ENCODE measurements at regions of chr11 and their contacts with region 1.

Region 1: DNA sequence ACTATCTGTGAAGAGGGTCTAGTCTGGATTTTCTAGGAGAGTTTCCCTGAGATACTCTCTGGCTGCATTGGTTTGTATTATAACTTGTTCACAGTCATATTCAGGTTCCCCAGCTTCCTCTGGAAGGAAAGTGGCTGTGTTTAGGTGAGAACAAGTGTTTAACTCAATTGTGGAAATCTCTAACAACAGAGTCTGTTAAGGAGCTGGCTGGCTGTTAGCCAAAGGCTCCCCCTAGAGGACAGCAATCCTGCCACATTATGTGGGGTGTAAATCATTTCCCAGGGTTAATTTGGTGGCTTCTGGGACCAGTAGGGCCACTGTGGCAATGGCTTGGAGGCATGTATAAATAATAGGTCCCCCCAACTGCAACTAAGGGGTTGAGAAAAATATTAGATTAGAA is 18.4 kb downstream of the MS4A6E start:
- DNase-seq: peak; percentile 17 to 64
- H3K4me3 ChIP-seq: no peak overlapping the region
- H3K27ac ChIP-seq: no peak overlapping the region
- H3K4me1 ChIP-seq: peaks cover 0 to 4% (median 0%) of the 10 kb centered on the region in 4 experiments; a peak in 1 of 7 replicates
- H3K27me3 ChIP-seq: no peaks in the 10 kb centered on the region
- CTCF ChIP-seq: peak; percentile 48 to 83 (median 66)
- EP300 ChIP-seq: no peak
- POLR2A ChIP-seq: no peak
- RAD21 ChIP-seq: peak; percentile 79 to 83

Region 2: GRCh38 chr11:60235321-60235720 is 110.2 kb before region 1 on chr11:
- CTCF ChIA-PET with region 1: no interaction called
- POLR2A ChIA-PET with region 1: no interaction called
- DNase-seq: no peak
- H3K4me3 ChIP-seq: no peak overlapping the region
- H3K27ac ChIP-seq: no peak overlapping the region
- H3K4me1 ChIP-seq: no peaks in the 10 kb centered on the region
- H3K27me3 ChIP-seq: no peaks in the 10 kb centered on the region
- CTCF ChIP-seq: no peak
- EP300 ChIP-seq: no peak
- POLR2A ChIP-seq: no peak
- RAD21 ChIP-seq: no peak

Region 3: DNA sequence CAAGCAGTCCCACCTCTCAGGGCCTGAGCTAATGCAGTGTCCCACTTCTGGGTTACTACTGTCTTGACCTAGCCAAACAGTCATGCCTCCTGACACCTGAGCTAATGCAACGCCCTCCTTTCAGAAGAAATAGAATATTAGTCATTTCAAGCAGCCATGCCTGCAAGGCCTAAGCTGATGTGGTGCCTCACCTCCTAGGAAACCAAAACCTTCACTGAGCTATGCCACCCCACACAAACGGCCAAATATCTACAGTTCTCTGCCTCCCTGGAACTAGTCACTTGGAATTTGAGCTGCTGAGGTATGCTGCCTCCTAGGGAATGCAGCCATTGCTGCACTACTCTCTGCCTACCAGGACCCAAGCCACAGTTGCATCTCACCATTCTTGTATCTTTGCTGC is 26.8 kb before region 1 on chr11:
- CTCF ChIA-PET with region 1: interaction called, 52 read pairs
- POLR2A ChIA-PET with region 1: no interaction called
- DNase-seq: no peak
- H3K4me3 ChIP-seq: no peak overlapping the region
- H3K27ac ChIP-seq: no peak overlapping the region
- H3K4me1 ChIP-seq: no peaks in the 10 kb centered on the region
- H3K27me3 ChIP-seq: no peaks in the 10 kb centered on the region
- CTCF ChIP-seq: peak in 2 of 3 experiments; percentile 3 to 33; a peak in 1 of 4 replicates
- EP300 ChIP-seq: no peak
- POLR2A ChIP-seq: no peak
- RAD21 ChIP-seq: no peak; a peak in 1 of 4 replicates

Region 4: DNA sequence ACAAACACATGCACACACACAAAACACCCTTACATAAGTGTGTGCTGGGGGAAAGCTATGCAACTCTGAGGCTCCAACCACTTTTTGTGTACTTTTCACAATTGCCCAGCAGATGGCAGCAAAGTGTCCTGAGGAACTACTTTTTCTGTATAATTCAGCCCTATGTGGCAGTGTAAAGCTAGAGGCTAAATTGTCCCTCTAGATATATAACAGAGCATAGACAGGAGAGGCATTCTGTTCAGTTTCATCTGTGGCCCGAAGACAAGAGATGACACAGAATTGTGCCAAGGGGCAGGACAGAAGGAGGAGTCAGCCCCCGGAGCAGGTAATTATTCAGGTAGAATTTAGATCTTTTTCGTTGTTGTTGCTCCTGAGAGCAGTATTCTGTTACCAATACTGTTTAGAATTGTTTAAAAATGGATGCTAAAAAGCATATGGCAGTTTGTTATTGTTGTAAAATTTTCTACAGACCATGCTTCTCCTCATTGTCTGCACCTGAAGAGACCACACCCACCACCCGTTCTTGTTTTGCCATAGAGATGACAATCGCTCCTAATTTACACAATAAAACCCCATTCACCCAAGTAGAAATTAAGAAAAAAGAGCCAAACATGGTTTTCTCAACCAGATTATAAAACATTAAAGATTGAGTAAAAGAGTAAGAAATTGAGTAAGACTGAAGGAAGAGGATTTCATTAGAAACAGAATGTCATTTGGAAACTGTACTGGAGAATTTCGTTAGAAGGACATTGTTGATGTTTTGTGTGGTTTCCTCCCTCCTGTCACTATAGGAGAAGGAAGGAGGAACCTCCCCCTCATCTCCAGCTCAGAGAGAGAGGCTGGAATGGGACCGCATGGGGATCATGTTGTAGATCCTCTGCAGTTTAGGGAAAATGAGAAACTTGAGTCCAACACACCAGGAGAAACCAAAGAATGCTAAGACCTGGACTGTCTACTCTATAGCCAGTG is 18.3 kb after region 1 on chr11:
- CTCF ChIA-PET with region 1: interaction called, 115 read pairs
- POLR2A ChIA-PET with region 1: no interaction called
- DNase-seq: peak in 1 of 2 experiments; percentile 77
- H3K4me3 ChIP-seq: peak overlapping the region in 1 of 4 experiments; percentile 38; a peak in 1 of 8 replicates
- H3K27ac ChIP-seq: peak overlapping the region; percentile 45; the same call in 1 of the 2 replicates
- H3K4me1 ChIP-seq: peaks cover 0 to 15% (median 4%) of the 10 kb centered on the region in 4 experiments; a peak in 4 of 7 replicates
- H3K27me3 ChIP-seq: no peaks in the 10 kb centered on the region
- CTCF ChIP-seq: peak in 2 of 3 experiments; percentile 73 to 87; a peak in 3 of 4 replicates
- EP300 ChIP-seq: no peak
- POLR2A ChIP-seq: no peak
- RAD21 ChIP-seq: peak; percentile 78 to 85

Region 5: DNA sequence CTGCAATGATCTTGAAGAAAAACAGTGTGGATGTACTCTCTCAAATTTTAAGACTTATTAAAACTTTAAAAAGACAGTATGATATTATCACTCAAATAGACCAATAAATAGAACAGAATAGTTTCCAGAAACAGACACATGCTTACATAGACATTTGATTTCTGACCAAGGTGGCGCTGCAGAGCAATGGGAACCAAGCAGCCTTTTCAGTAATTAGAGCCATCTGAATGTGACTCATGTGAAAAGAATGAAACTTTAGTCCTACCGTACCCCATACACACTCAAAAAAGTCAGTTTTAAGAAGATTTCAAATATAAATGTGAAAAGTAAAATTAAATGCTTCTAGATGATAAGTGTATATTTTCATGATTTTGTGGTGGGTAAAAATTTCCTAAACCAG is 279.8 kb after region 1 on chr11:
- CTCF ChIA-PET with region 1: interaction called, 25 read pairs
- POLR2A ChIA-PET with region 1: no interaction called
- DNase-seq: peak in 1 of 2 experiments; percentile 9
- H3K4me3 ChIP-seq: no peak overlapping the region
- H3K27ac ChIP-seq: no peak overlapping the region
- H3K4me1 ChIP-seq: no peaks in the 10 kb centered on the region
- H3K27me3 ChIP-seq: no peaks in the 10 kb centered on the region
- CTCF ChIP-seq: peak in 2 of 3 experiments; percentile 40 to 64; a peak in 3 of 4 replicates
- EP300 ChIP-seq: no peak
- POLR2A ChIP-seq: no peak
- RAD21 ChIP-seq: peak; percentile 15 to 18; a peak in 1 of 4 replicates

Region 6: DNA sequence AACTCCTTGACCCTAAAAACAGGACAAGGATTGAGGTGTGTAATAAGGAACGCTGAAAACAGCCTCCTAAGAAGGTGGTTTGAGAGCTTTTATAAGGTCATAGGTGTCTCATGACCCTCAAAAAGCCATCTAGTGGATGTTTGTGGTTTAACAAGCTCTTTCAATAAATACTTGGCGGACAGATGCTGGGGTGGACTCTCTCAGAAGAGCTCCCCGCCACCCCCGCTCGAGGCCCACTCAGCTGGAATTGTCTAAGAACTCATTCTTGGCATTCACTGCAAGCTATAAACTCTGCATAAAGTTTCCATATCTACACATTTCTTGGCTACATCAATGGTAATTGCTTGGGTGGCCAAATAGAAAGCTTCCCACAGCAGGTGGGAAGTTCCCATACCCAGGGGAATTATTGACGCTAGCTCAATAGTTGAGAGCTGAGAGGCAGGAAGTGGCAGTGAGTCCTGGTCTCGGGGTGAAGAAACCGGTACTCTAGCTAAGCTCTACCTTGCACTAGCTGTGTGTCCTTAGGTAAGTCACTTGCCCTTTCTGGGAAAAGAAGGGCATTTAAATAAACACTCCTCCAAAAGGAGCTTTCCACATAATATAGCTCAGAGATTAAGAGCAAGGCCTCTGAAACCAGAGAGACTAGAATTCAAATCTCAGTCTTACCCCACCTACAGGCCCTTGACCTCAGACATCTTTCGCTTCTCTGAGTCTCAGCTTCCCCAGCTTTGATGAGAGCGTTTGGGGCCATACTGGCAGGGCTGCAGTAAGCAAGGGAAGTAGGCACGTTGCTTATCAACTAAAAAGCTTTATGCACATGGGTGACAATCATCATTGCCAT is 417.6 kb after region 1 on chr11:
- CTCF ChIA-PET with region 1: interaction called, 14 read pairs
- POLR2A ChIA-PET with region 1: no interaction called
- DNase-seq: no peak
- H3K4me3 ChIP-seq: no peak overlapping the region
- H3K27ac ChIP-seq: no peak overlapping the region
- H3K4me1 ChIP-seq: peaks cover 0 to 1% (median 0%) of the 10 kb centered on the region in 4 experiments; a peak in 1 of 7 replicates
- H3K27me3 ChIP-seq: peaks cover 0 to 6% (median 3%) of the 10 kb centered on the region in 4 experiments; a peak in 3 of 7 replicates
- CTCF ChIP-seq: peak in 2 of 3 experiments; percentile 47 to 58; a peak in 2 of 4 replicates
- EP300 ChIP-seq: no peak
- POLR2A ChIP-seq: no peak
- RAD21 ChIP-seq: peak; percentile 40 to 48